BJ (cell line): ENCODE measurements at regions of chr14 and their contacts with region 1.

Region 1: GRCh38 chr14:99415496-99416281 is 65.0 kb downstream of the SETD3 start:
- DNase-seq: peak; percentile 68
- H3K4me3 ChIP-seq: no peak overlapping the region
- H3K27me3 ChIP-seq: no peaks in the 10 kb centered on the region
- CTCF ChIP-seq: peak; percentile 78

Region 2: GRCh38 chr14:99320105-99320572 is 95.5 kb before region 1 on chr14:
- CTCF ChIA-PET with region 1: interaction called, 15 read pairs
- POLR2A ChIA-PET with region 1: no interaction called
- DNase-seq: no peak
- H3K4me3 ChIP-seq: no peak overlapping the region
- H3K27me3 ChIP-seq: no peaks in the 10 kb centered on the region
- CTCF ChIP-seq: peak; percentile 82

Region 3: GRCh38 chr14:99378782-99379214 is 36.9 kb before region 1 on chr14:
- CTCF ChIA-PET with region 1: interaction called, 11 read pairs
- POLR2A ChIA-PET with region 1: no interaction called
- DNase-seq: no peak
- H3K4me3 ChIP-seq: no peak overlapping the region
- H3K27me3 ChIP-seq: peaks cover 3% of the 10 kb centered on the region; the same call in 1 of the 2 replicates
- CTCF ChIP-seq: no peak

Region 4: GRCh38 chr14:99393047-99393655 is 22.5 kb before region 1 on chr14:
- CTCF ChIA-PET with region 1: interaction called, 193 read pairs
- POLR2A ChIA-PET with region 1: no interaction called
- DNase-seq: no peak
- H3K4me3 ChIP-seq: no peak overlapping the region
- H3K27me3 ChIP-seq: no peaks in the 10 kb centered on the region
- CTCF ChIP-seq: peak; percentile 85

Region 5: GRCh38 chr14:99427632-99428300 is 12.1 kb after region 1 on chr14:
- CTCF ChIA-PET with region 1: interaction called, 21 read pairs
- POLR2A ChIA-PET with region 1: no interaction called
- DNase-seq: peak; percentile 46
- H3K4me3 ChIP-seq: no peak overlapping the region
- H3K27me3 ChIP-seq: no peaks in the 10 kb centered on the region
- CTCF ChIP-seq: no peak